KBM-7 (cell line): ENCODE measurements at regions of chr11 and their contacts with region 1.

Region 1: DNA sequence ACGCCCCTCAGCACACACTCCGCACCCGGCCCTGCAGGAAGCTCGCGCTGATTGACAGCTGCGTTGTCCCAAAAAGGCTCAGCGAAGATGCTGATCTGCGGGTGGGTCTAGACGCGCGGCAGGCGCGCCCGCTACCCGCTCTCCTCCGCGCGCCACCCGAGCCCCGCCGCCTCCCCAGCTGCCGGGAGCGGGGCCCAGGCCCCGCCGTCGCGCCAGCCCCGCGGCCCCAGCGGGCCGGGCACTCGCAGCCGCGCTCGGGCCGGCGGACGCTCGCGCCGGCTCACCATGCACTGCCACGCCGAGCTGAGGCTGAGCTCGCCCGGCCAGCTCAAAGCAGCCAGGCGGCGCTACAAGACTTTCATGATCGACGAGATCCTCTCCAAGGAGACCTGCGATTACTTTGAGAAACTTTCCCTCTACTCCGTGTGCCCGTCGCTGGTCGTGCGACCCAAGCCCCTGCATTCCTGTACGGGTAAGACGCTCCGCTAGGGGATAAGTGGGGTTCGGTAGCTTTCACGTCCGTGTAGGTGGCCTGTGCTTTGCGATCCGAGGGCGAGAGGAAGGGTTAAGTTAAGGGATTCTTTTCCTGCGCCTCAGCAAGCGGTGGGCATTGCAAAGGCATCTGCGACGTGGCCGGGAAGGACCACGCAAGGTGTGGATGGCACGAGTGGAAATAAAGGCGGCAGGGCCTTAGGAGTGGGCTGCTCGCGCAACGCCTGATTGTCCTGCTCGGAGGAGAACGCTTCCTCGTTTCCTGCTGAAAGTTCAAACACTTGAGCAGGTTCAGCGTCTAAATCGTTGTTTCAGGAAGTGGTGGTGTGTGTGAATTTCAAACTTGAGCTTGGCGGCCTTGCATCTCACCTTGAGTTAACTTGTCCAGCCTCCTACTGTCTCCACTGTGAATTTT is at the start of gene BARX2:
- DNase-seq: peak; percentile 29

Region 2: DNA sequence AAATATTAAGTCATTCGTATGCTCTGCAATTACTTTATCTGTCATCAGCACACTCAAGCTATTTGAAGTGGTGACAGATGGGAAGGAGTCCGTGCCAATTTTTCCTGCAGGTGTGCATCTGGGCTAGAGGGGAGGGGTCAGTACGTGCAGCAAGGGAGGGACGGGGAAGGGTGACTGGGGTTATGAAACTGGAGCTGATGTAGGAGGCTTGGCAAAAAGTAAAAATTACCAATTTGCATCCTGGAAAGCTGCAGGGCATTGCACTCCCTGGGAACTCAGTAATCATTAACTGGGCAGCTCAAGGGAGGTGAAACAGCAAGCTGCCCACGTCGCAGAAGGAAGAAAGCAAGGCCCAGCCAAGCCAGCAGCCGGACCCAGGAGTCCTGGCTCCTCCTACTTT is 352.6 kb after region 1 on chr11:
- in situ Hi-C with region 1: loop called (anchors 25 kb)
- DNase-seq: no peak